Heart left ventricle (tissue), 16 donors: ENCODE measurements at regions of chr22 and their contacts with region 1.

Region 1: GRCh38 chr22:40036591-40037225 is 42.0 kb downstream of the FAM83F start:
- DNase-seq: peak in 4 of 5 donors; percentile 37 to 69 (median 52)
- ATAC-seq: peak; percentile 74 to 82 (median 77)
- H3K4me3 ChIP-seq: no peak overlapping the region
- H3K27ac ChIP-seq: no peak overlapping the region
- H3K4me1 ChIP-seq: peaks cover 0 to 21% (median 10%) of the 10 kb centered on the region in 12 donors
- H3K27me3 ChIP-seq: peaks cover 0 to 12% (median 5%) of the 10 kb centered on the region in 9 donors
- CTCF ChIP-seq: peak; percentile 53 to 77 (median 64)
- POLR2A ChIP-seq: no peak

Region 2: DNA sequence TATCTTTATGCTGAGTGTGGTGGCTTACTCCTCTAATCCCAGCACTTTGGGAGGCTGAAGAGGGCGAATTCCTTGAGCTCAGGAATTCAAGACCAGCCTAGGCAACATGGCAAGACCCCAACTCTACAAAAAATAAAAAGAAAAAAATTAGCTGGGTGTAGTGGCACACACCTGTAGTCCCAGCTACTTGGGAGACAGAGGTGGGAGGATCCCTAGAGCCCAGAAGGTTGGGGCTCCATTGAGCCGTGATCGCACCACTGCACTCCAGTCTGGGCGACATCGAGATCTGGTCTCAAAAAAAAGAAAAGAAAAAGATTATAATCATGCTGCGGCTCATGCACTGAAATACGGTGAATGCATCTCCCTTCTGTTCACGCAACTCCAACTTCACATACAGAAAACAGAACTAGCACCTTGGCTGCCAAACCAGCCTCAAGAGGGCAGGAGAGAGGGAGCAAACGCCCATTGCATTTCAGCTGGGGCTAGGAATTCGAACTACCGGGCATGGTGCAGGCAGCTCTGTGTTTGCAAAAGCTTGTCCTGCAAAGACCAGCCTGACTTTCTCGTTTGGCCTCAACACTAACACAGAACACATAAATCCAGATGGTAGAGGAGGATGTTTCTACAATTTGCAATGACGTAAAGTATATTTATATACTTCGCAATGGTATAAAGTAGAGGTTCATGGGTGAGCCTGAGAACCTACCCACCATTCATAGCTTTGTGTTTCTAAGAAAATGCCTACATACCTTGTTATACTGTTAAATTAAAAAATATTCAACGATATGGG is 693.3 kb before region 1 on chr22:
- intact Hi-C with region 1: loop called in 1 of 10 experiments (anchors 10 kb)
- DNase-seq: peak in 4 of 5 donors; percentile 44 to 60 (median 58)
- ATAC-seq: peak in 3 of 4 donors; percentile 72 to 83 (median 80)
- H3K4me3 ChIP-seq: no peak overlapping the region
- H3K27ac ChIP-seq: no peak overlapping the region
- H3K4me1 ChIP-seq: peaks cover 0 to under 1% (median 0%) of the 10 kb centered on the region in 12 donors
- H3K27me3 ChIP-seq: peaks cover 0 to 3% (median 0%) of the 10 kb centered on the region in 9 donors
- CTCF ChIP-seq: peak; percentile 49 to 80 (median 64)
- POLR2A ChIP-seq: no peak

Region 3: GRCh38 chr22:39559454-39560105 is 477.1 kb before region 1 on chr22:
- intact Hi-C with region 1: loop called in 1 of 10 experiments (anchors 5 kb)
- DNase-seq: no peak
- ATAC-seq: peak in 2 of 4 donors; percentile 25
- H3K4me3 ChIP-seq: no peak overlapping the region
- H3K27ac ChIP-seq: no peak overlapping the region
- H3K4me1 ChIP-seq: peaks cover 0 to 22% (median 0%) of the 10 kb centered on the region in 12 donors
- H3K27me3 ChIP-seq: peaks cover 16 to 71% (median 29%) of the 10 kb centered on the region in 9 donors
- CTCF ChIP-seq: peak in 9 of 12 donors; percentile 15 to 39 (median 30)
- POLR2A ChIP-seq: no peak

Region 4: GRCh38 chr22:40289991-40290459 is 253.3 kb after region 1 on chr22:
- intact Hi-C with region 1: loop called in 1 of 10 experiments (anchors 10 kb)
- DNase-seq: peak in 3 of 5 donors; percentile 28 to 62 (median 48)
- ATAC-seq: peak; percentile 24 to 82 (median 66)
- H3K4me3 ChIP-seq: peak overlapping the region in 1 of 12 donors; percentile 5
- H3K27ac ChIP-seq: peak overlapping the region in 3 of 12 donors; percentile 8 to 84 (median 20)
- H3K4me1 ChIP-seq: peaks cover 0 to 20% (median 0%) of the 10 kb centered on the region in 12 donors
- H3K27me3 ChIP-seq: no peaks in the 10 kb centered on the region
- CTCF ChIP-seq: no peak
- POLR2A ChIP-seq: no peak